ENCODE measurements at regions of chr15 and their contacts with region 1.

Region 1: GRCh38 chr15:75061272-75061671 is 37.9 kb downstream of the PPCDC start:
- DNase-seq: peak; percentile 52 to 81 (median 80)
- H3K4me3 ChIP-seq: peak overlapping the region in 2 of 7 experiments; percentile 1 to 32
- H3K27ac ChIP-seq: no peak overlapping the region
- H3K4me1 ChIP-seq: peaks cover 16 to 65% (median 34%) of the 10 kb centered on the region in 4 experiments
- H3K27me3 ChIP-seq: no peaks in the 10 kb centered on the region

Region 2: DNA sequence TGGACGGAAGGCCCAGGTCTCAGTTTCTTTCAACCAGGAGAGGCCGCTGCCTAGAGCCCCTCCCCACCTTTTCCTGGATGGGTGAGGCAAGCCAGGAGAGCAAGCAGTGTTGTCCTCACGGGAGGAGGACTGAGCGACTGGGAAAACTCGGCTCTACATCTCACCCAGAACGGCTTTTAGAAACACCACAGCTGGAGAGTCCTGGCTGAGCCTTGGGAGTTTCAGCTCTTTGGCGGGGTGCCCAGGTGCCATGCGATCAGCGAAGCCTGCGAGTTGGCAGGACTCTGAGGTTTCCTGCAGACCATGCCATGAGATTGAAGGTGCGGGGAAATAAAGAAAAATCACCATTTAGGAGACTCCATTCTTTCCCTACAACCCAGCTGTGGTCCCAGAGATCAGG is 11.9 kb before region 1 on chr15:
- CTCF ChIA-PET with region 1: interaction called, 32 read pairs
- POLR2A ChIA-PET with region 1: interaction called, 3 read pairs
- DNase-seq: peak in 1 of 3 donors; percentile 61
- H3K4me3 ChIP-seq: no peak overlapping the region
- H3K27ac ChIP-seq: no peak overlapping the region
- H3K4me1 ChIP-seq: peaks cover 5 to 77% (median 62%) of the 10 kb centered on the region in 4 experiments
- H3K27me3 ChIP-seq: no peaks in the 10 kb centered on the region

Measured in common myeloid progenitor, CD34-positive (primary cell).